ENCODE measurements at regions of chr3 and their contacts with region 1.

Region 1: GRCh38 chr3:27428446-27428845 is 55.7 kb downstream of the SLC4A7 start:
- DNase-seq: no peak
- H3K4me3 Mint-ChIP-seq: no peak overlapping the region
- H3K27ac Mint-ChIP-seq: no peak overlapping the region
- H3K4me1 Mint-ChIP-seq: peaks cover 5% of the 10 kb centered on the region
- H3K27me3 Mint-ChIP-seq: no peaks in the 10 kb centered on the region

Region 2: DNA sequence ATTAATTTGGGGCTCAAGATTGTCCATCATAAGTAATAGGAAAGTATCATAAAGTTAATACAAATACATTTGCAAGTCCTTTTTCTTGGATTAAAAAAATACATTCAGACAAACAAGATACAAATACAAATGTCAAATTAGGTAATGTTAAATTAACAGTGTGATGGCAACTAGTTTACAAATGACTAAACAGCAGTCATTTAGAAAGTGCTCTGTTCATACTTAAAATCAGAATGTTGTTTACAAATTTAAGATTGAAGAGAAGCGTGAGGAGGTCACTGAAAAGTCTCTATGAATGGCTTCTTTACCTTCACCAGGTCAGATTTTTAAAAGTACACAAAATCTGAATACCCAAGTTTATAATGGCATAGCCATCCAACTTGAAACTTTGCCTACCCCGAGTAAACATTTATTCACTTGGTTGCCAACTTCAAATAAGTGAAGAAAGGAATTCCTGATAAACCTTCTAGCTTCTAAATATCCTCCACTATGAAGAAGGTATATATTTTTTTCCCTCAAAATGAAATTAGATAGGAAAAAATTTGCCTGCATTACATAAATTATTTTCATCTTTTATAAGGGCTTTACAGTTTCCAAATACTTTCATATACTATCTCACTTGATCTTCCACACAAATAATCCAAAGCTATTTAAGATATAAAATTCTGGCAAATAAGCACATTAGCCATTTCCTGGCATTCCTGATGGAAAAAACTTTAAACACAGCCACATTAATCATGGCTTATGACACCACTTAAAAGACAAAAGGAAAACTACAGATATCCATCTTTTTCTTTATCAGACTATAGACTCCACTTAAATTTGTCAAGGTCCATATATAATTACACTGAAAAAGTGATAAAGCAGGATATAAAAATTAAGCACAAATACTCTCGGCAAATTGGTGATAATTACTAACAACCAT is 47.8 kb before region 1 on chr3:
- CTCF ChIA-PET with region 1: no interaction called
- intact Hi-C with region 1: loop called (anchors 5 kb)
- DNase-seq: no peak
- H3K4me3 Mint-ChIP-seq: no peak overlapping the region
- H3K27ac Mint-ChIP-seq: no peak overlapping the region
- H3K4me1 Mint-ChIP-seq: peaks cover 3% of the 10 kb centered on the region
- H3K27me3 Mint-ChIP-seq: no peaks in the 10 kb centered on the region

Region 3: DNA sequence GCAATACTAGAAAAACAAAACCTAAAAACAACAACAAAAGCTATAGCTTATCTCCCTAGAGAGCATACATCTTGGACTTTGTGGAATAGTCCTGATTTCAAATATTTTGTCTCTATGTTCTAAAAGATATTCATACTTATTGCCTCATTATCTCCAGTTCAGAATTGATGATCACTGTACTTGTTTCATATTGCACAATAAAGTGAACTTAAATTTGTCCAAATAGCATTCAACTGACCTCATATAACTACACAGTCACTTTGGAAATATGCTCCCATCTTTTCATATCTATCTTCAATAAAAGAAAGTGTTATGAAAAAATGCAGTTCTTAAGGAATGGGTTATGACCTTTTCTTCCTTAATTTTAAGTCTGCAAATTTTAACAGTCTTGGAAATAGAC is 584.4 kb after region 1 on chr3:
- CTCF ChIA-PET with region 1: no interaction called
- intact Hi-C with region 1: no loop called
- DNase-seq: no peak
- H3K4me3 Mint-ChIP-seq: no peak overlapping the region
- H3K27ac Mint-ChIP-seq: no peak overlapping the region
- H3K4me1 Mint-ChIP-seq: no peaks in the 10 kb centered on the region
- H3K27me3 Mint-ChIP-seq: no peaks in the 10 kb centered on the region

Region 4: DNA sequence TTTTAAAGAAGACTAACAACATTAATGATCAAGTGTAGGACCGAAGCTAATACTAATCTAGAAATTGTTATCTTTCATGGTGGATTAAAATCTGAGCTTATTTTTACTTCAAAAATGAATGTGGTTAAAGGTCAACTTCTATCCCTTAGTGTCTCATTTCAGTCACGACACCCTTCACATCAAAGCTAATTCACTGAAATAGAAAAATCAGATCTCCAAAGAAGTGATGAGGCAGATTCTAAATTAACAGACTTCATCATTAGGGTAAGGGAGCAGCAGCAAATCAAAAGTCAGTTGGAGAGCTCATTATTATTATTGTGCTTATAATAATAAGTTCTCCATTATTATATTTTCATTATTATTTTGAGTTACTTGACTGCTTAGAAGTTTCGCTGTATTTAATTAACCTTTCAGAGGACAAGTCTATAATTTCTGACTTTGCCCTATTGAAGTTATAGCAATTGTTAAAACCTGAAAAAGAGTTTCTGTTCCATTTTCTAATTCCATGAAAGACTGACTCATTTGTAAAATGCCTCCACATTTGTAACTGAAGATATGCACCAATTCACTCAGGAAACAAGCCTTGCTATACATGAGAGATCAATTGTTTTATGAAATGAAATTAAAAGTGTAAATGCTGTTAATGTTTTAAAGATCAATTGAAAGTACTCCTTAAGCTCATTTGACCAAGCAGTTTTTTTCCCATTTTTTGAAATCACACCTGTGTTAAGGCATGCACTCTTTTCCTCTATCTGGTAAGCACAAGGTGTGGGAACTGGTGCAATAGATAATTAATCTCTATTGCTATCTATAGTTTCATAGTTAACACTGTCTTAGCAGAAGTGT is 789.8 kb after region 1 on chr3:
- CTCF ChIA-PET with region 1: no interaction called
- intact Hi-C with region 1: no loop called
- DNase-seq: no peak
- H3K4me3 Mint-ChIP-seq: no peak overlapping the region
- H3K27ac Mint-ChIP-seq: no peak overlapping the region
- H3K4me1 Mint-ChIP-seq: peaks cover 17% of the 10 kb centered on the region
- H3K27me3 Mint-ChIP-seq: no peaks in the 10 kb centered on the region

Measured in activated naive CD4-positive, alpha-beta T cell treated with anti-CD3 and anti-CD28 coated beads for 36 hours (primary cell).